MCF 10A (cell line): ENCODE measurements at regions of chr12 and their contacts with region 1.

Region 1: DNA sequence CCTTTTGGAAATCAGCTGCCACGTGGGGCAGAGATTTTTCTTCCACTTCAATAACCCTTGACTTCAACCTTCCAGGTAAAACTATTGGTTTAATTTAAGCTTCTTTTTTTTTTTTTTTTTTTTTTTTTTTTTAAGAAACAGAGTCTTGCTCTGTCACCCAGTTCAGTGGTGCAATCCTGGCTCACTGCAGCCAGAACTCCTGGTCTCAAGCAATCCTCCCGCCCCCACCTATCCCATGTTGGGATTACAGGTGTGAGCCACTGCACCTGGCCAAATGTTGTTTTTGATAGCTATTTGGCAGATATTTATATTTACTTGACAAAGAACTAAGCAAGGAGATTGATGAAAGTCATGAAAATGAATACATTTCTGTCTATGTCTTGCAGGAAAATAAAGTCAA is 65.1 kb downstream of the SINHCAF start:
- DNase-seq: no peak
- H3K4me3 Mint-ChIP-seq: no peak overlapping the region
- H3K27ac Mint-ChIP-seq: no peak overlapping the region
- H3K4me1 Mint-ChIP-seq: no peaks in the 10 kb centered on the region
- H3K27me3 Mint-ChIP-seq: peaks cover 7% of the 10 kb centered on the region
- CTCF ChIP-seq: no peak

Region 2: GRCh38 chr12:30074916-30075315 is 1185.9 kb before region 1 on chr12:
- CTCF ChIA-PET with region 1: no interaction called
- POLR2A ChIA-PET with region 1: no interaction called
- intact Hi-C with region 1: no loop called
- DNase-seq: no peak
- H3K4me3 Mint-ChIP-seq: no peak overlapping the region
- H3K27ac Mint-ChIP-seq: no peak overlapping the region
- H3K4me1 Mint-ChIP-seq: peaks cover 5% of the 10 kb centered on the region
- H3K27me3 Mint-ChIP-seq: no peaks in the 10 kb centered on the region
- CTCF ChIP-seq: no peak

Region 3: DNA sequence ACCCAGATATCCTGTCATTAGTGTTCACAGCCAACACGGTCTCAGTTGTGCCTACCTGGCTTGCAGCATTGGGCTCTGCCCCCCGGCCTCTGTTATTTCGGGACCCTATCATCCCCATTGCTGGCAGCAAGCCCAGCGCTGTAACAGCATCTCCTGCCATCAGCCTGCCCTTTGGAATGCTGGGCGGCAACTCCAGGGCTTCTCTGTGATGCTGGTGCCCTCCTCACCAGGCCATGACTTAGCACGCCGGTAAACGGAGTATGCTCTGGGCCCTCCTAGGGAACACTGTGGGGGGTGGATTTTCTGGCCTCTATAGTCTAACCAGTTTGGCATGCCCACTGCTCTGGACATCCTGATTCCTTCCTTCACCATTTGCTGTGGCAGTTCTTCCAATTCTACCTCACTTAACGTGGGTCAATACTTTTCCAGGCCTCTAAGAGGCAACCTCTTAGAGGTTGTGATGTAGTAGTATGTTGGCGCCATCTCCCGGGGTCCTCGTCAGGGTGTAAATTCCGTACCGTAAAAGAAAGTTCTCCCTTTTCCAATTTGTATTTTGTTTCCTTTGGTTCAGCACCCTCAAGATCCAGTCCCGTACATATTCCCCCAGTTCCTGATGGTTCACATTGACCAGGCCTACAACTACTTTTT is 14.9 kb before region 1 on chr12:
- CTCF ChIA-PET with region 1: interaction called, 16 read pairs
- POLR2A ChIA-PET with region 1: interaction called, 4 read pairs
- intact Hi-C with region 1: no loop called
- DNase-seq: no peak
- H3K4me3 Mint-ChIP-seq: no peak overlapping the region
- H3K27ac Mint-ChIP-seq: peak overlapping the region; percentile 44
- H3K4me1 Mint-ChIP-seq: peaks cover 6% of the 10 kb centered on the region
- H3K27me3 Mint-ChIP-seq: no peaks in the 10 kb centered on the region
- CTCF ChIP-seq: no peak